B cell (primary cell): ENCODE measurements at regions of chr18 and their contacts with region 1.

Region 1: DNA sequence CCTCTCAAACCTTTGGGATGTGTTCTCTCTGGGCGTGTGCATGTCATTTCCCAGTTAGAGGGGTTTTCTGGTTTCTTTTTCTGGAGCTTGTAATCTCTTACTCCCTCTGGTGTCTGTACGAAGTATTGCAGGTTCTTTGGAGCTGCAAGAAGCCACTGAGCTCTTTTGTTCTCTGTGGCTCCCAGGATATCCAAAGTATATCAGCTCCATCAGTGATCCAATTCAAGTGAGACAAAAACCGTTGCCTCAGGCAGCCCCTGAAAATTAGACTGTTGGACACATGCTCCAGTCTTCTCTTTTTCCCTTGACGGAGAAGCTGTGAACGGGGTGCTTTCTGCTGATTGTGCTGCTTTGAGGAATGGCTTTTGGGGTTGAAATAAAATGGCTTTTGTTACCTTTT is 59.0 kb upstream of the LDLRAD4 start:
- DNase-seq: peak; percentile 71
- ATAC-seq: peak; percentile 62
- H3K4me3 ChIP-seq: no peak overlapping the region
- H3K4me3 Mint-ChIP-seq: no peak overlapping the region
- H3K27ac ChIP-seq: no peak overlapping the region
- H3K27ac Mint-ChIP-seq: no peak overlapping the region
- H3K4me1 ChIP-seq: peaks cover 0 to 3% of the 10 kb centered on the region in 2 donors
- H3K4me1 Mint-ChIP-seq: peaks cover 3% of the 10 kb centered on the region
- H3K27me3 ChIP-seq: no peaks in the 10 kb centered on the region
- H3K27me3 Mint-ChIP-seq: peaks cover 8% of the 10 kb centered on the region
- CTCF ChIP-seq: peak; percentile 83

Region 2: GRCh38 chr18:12726774-12727550 is 432.6 kb before region 1 on chr18:
- CTCF ChIA-PET with region 1: interaction called, 10 read pairs
- POLR2A ChIA-PET with region 1: no interaction called
- intact Hi-C with region 1: loop called (anchors 1 kb)
- DNase-seq: peak; percentile 77
- ATAC-seq: peak; percentile 61
- H3K4me3 ChIP-seq: no peak overlapping the region
- H3K4me3 Mint-ChIP-seq: no peak overlapping the region
- H3K27ac ChIP-seq: no peak overlapping the region
- H3K27ac Mint-ChIP-seq: no peak overlapping the region
- H3K4me1 ChIP-seq: no peaks in the 10 kb centered on the region
- H3K4me1 Mint-ChIP-seq: no peaks in the 10 kb centered on the region
- H3K27me3 ChIP-seq: no peaks in the 10 kb centered on the region
- H3K27me3 Mint-ChIP-seq: no peaks in the 10 kb centered on the region
- CTCF ChIP-seq: peak; percentile 93

Region 3: DNA sequence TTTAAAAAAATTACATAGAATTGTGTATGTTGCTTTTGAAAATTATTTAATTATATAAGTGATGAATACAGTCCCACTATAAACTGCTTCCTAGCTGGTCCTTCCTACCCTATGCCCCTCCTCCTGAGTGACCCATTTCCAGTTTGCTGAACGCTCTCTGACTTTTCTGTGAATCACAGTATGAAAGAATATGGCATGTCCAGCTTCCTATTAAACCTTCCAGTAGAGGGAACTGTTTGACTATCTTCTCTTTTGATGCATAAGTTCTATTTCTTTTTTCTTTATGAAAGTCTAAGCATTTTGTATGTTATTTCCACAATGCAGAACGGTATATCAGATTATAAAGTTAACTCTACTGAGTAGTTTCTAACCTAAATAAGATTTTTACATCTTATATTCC is 415.5 kb before region 1 on chr18:
- CTCF ChIA-PET with region 1: interaction called, 17 read pairs
- POLR2A ChIA-PET with region 1: no interaction called
- intact Hi-C with region 1: loop called (anchors 5 kb)
- DNase-seq: peak; percentile 59
- ATAC-seq: peak; percentile 57
- H3K4me3 ChIP-seq: no peak overlapping the region
- H3K4me3 Mint-ChIP-seq: no peak overlapping the region
- H3K27ac ChIP-seq: no peak overlapping the region
- H3K27ac Mint-ChIP-seq: no peak overlapping the region
- H3K4me1 ChIP-seq: peaks cover 0 to 2% of the 10 kb centered on the region in 2 donors
- H3K4me1 Mint-ChIP-seq: peaks cover 2% of the 10 kb centered on the region
- H3K27me3 ChIP-seq: peaks cover 0 to 5% (median 0%) of the 10 kb centered on the region in 4 experiments
- H3K27me3 Mint-ChIP-seq: peaks cover 8% of the 10 kb centered on the region
- CTCF ChIP-seq: peak; percentile 75

Region 4: DNA sequence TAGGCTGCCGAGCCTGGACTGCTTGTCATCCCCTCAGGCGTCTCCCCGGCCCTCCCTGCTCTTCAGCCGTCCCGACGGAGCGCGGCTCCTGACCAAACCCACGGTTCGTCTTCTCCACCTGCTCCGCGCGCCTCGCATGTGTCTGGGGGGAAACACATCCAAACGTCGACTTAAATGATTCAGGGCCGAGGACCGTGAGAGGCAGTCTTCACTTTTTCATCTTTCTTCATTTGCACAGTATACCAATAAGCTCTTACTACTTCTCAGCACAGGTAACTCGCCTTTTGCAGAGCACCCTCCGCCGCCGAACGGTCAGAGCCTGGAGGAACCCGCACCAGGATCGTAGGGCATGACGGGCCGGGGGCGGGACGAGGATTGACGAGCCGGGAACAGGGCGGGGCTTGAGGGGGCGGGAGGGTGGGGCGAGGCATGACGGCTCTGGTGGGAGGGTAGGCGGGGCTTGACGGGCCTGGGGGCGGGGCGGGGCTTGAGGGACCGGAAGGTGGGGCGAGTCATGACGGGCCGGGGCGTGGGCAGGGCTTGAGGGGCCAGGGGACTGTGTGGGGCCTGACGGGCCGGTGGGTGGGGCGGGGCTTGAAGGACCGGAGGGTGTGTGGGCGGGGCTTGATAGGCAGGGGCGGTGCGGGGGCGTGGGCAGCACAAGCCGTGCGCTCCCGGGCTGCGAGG is 212.1 kb before region 1 on chr18 and contains the start of gene SEH1L:
- CTCF ChIA-PET with region 1: no interaction called
- POLR2A ChIA-PET with region 1: no interaction called
- intact Hi-C with region 1: no loop called
- DNase-seq: no peak
- ATAC-seq: peak; percentile 91
- H3K4me3 ChIP-seq: peak within 1 kb of the TSS; percentile 69 to 97 (median 75)
- H3K4me3 Mint-ChIP-seq: peak within 1 kb of the TSS; percentile 96
- H3K27ac ChIP-seq: peak within 1 kb of the TSS; percentile 88 to 89
- H3K27ac Mint-ChIP-seq: peak within 1 kb of the TSS; percentile 94
- H3K4me1 ChIP-seq: peaks cover 5 to 22% of the 10 kb centered on the region in 2 donors
- H3K4me1 Mint-ChIP-seq: peaks cover 29% of the 10 kb centered on the region
- H3K27me3 ChIP-seq: no peaks in the 10 kb centered on the region
- H3K27me3 Mint-ChIP-seq: no peaks in the 10 kb centered on the region
- CTCF ChIP-seq: no peak
- total RNA-seq, gene SEH1L: 46.4 and 48.1 TPM in 2 replicates

Region 5: GRCh38 chr18:13003466-13003896 is 156.1 kb before region 1 on chr18:
- CTCF ChIA-PET with region 1: interaction called, 5 read pairs
- POLR2A ChIA-PET with region 1: no interaction called
- intact Hi-C with region 1: loop called (anchors 1 kb)
- DNase-seq: peak; percentile 24
- ATAC-seq: peak; percentile 49
- H3K4me3 ChIP-seq: no peak overlapping the region
- H3K4me3 Mint-ChIP-seq: no peak overlapping the region
- H3K27ac ChIP-seq: no peak overlapping the region
- H3K27ac Mint-ChIP-seq: no peak overlapping the region
- H3K4me1 ChIP-seq: no peaks in the 10 kb centered on the region
- H3K4me1 Mint-ChIP-seq: peaks cover 15% of the 10 kb centered on the region
- H3K27me3 ChIP-seq: no peaks in the 10 kb centered on the region
- H3K27me3 Mint-ChIP-seq: no peaks in the 10 kb centered on the region
- CTCF ChIP-seq: peak; percentile 30

Region 6: GRCh38 chr18:13112982-13113381 is 46.6 kb before region 1 on chr18:
- CTCF ChIA-PET with region 1: interaction called, 35 read pairs
- POLR2A ChIA-PET with region 1: no interaction called
- intact Hi-C with region 1: loop called (anchors 1 kb)
- DNase-seq: no peak
- ATAC-seq: no peak
- H3K4me3 ChIP-seq: no peak overlapping the region
- H3K4me3 Mint-ChIP-seq: no peak overlapping the region
- H3K27ac ChIP-seq: no peak overlapping the region
- H3K27ac Mint-ChIP-seq: no peak overlapping the region
- H3K4me1 ChIP-seq: no peaks in the 10 kb centered on the region
- H3K4me1 Mint-ChIP-seq: no peaks in the 10 kb centered on the region
- H3K27me3 ChIP-seq: no peaks in the 10 kb centered on the region
- H3K27me3 Mint-ChIP-seq: no peaks in the 10 kb centered on the region
- CTCF ChIP-seq: no peak

Region 7: DNA sequence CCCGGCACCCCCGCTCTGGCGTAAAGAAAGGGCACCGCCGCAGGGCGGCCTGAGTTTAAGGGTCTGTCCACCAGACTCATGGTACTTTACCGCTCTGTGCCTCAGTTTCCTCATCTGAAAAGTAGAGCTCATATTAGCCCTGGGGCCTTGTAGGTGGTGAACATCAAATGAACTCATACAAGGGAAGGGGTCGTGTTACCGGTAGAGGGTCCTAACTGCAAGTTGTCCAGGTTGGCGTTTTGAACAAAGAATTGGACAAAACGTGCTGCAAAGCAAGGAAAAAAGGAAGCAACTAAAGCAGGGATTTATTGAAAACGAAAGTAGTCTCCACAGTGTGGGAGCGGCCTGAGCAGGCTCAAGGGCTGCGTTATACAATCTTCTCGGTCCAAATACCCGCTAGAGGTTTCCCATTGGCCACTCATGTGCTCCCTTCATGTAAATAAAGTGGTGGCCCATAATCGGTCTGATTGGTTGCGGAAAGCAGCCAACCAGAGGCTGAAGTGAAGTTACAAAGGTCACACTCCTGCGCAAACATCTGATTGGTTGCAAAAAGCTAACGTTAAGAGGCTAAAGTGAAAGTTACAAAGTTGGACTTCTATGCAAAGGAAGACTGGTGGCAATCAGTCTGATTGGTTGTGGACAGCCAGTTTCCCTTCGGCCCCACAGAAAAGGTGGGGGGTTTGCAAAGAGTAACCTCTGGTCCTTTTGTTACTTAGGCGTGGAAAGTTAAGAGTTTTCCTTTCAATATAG is 21.7 kb before region 1 on chr18:
- CTCF ChIA-PET with region 1: interaction called, 6 read pairs
- POLR2A ChIA-PET with region 1: no interaction called
- intact Hi-C with region 1: loop called (anchors 2 kb)
- DNase-seq: peak; percentile 85
- ATAC-seq: peak; percentile 90
- H3K4me3 ChIP-seq: peak overlapping the region; percentile 58 to 98 (median 84)
- H3K4me3 Mint-ChIP-seq: peak overlapping the region; percentile 100
- H3K27ac ChIP-seq: peak overlapping the region; percentile 65 to 86
- H3K27ac Mint-ChIP-seq: peak overlapping the region; percentile 99
- H3K4me1 ChIP-seq: peaks cover 6 to 11% of the 10 kb centered on the region in 2 donors
- H3K4me1 Mint-ChIP-seq: peaks cover 24% of the 10 kb centered on the region
- H3K27me3 ChIP-seq: no peaks in the 10 kb centered on the region
- H3K27me3 Mint-ChIP-seq: no peaks in the 10 kb centered on the region
- CTCF ChIP-seq: no peak